Naive thymus-derived CD4-positive, alpha-beta T cell (primary cell): ENCODE measurements at regions of chr6 and their contacts with region 1.

Region 1: GRCh38 chr6:107800564-107801164 is 23.4 kb downstream of the SCML4 start:
- DNase-seq: peak in 4 of 9 donors; percentile 28 to 53 (median 42)
- ATAC-seq: peak; percentile 75
- H3K4me3 ChIP-seq: no peak overlapping the region
- H3K4me3 Mint-ChIP-seq: peak overlapping the region in 2 of 10 donors; percentile 33 to 43
- H3K27ac ChIP-seq: no peak overlapping the region
- H3K27ac Mint-ChIP-seq: peak overlapping the region in 8 of 9 donors; percentile 53 to 96 (median 90)
- H3K4me1 ChIP-seq: peaks cover 10 to 34% of the 10 kb centered on the region in 2 donors
- H3K4me1 Mint-ChIP-seq: peaks cover 17 to 87% (median 81%) of the 10 kb centered on the region in 7 donors
- H3K27me3 ChIP-seq: no peaks in the 10 kb centered on the region
- H3K27me3 Mint-ChIP-seq: peaks cover 0 to 9% (median 0%) of the 10 kb centered on the region in 5 donors

Region 2: DNA sequence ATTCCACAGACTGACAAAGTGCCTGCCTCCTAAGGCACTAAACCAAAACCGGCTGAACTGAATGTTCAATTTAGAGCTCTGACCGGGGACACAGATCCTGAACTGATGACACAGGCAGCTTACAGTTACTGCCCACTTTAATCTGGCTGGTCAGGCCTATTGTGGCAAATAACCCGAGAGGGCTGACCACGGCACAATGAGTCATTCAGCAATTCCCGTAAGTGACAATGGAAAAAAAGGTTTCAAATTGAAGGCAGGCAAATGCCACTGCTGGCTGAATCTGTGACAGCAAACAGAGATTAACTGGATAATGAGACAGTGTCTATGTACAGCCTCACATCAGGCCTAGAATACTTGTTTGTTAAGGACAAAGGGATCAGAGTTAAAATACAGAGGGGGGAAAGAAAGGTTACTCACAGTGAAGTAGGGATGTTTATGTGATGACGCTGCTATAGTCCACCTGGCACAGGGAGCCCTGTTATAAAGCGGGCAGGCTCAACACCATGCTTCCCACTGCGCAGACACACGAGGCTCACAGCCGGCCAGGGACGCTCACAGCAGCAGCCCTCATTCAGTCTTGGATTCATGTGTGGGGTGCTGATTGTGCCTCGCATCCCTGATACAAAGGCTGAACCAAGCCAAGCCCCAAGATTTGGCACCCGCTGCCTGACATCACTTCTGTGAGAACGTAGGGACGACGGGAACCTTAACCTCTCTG is 1225.8 kb before region 1 on chr6:
- CTCF ChIA-PET with region 1: no interaction called
- POLR2A ChIA-PET with region 1: no interaction called
- intact Hi-C with region 1: no loop called
- DNase-seq: no peak
- ATAC-seq: no peak
- H3K4me3 ChIP-seq: no peak overlapping the region
- H3K4me3 Mint-ChIP-seq: no peak overlapping the region
- H3K27ac ChIP-seq: no peak overlapping the region
- H3K27ac Mint-ChIP-seq: no peak overlapping the region
- H3K4me1 ChIP-seq: no peaks in the 10 kb centered on the region
- H3K4me1 Mint-ChIP-seq: peaks cover 0 to 21% (median 0%) of the 10 kb centered on the region in 7 donors
- H3K27me3 ChIP-seq: no peaks in the 10 kb centered on the region
- H3K27me3 Mint-ChIP-seq: no peaks in the 10 kb centered on the region

Region 3: GRCh38 chr6:107493158-107494057 is 307.3 kb before region 1 on chr6:
- CTCF ChIA-PET with region 1: no interaction called
- POLR2A ChIA-PET with region 1: no interaction called
- intact Hi-C with region 1: no loop called
- DNase-seq: no peak
- ATAC-seq: no peak
- H3K4me3 ChIP-seq: no peak overlapping the region
- H3K4me3 Mint-ChIP-seq: no peak overlapping the region
- H3K27ac ChIP-seq: no peak overlapping the region
- H3K27ac Mint-ChIP-seq: no peak overlapping the region
- H3K4me1 ChIP-seq: peaks cover 9 to 12% of the 10 kb centered on the region in 2 donors
- H3K4me1 Mint-ChIP-seq: peaks cover 7 to 19% (median 15%) of the 10 kb centered on the region in 7 donors
- H3K27me3 ChIP-seq: peaks cover 10 to 23% of the 10 kb centered on the region in 2 donors
- H3K27me3 Mint-ChIP-seq: peaks cover 12 to 46% (median 39%) of the 10 kb centered on the region in 5 donors

Region 4: DNA sequence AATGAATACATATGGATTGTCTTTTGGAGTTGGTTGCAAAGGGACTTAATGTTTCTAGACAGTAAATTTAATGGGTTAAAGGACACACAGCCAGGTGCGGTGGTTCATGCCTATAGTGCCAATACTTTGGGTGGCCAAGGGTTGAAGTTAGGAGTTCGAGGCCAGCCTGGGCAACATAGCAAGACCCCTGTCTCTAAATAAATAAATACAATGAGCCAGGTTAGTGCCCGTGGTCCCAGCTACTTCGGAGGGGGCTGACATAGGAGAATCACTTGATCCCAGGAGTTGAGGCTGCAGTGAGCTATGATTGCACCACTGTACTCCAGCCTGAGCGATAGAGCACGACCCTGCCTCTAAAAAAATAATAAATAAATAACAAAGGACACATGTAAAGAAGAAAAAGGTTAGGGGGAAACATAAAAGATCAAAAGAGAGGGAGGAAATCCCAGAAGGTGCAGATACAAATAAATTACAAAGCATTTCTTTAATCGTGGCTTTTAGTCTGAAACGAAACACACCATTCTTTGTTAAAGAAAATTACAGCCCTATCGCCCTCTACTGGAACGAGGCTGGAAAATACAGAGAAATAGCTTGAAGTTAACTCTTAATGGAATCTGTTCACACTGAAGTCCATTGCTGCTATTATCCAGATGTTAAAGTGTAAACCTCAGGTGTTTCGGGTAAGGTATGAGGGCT is 66.1 kb after region 1 on chr6:
- CTCF ChIA-PET with region 1: no interaction called
- POLR2A ChIA-PET with region 1: no interaction called
- intact Hi-C with region 1: loop called (anchors 1 kb)
- DNase-seq: peak in 7 of 9 donors; percentile 29 to 64 (median 52)
- ATAC-seq: peak; percentile 76
- H3K4me3 ChIP-seq: no peak overlapping the region
- H3K4me3 Mint-ChIP-seq: peak overlapping the region in 1 of 10 donors; percentile 32
- H3K27ac ChIP-seq: no peak overlapping the region
- H3K27ac Mint-ChIP-seq: peak overlapping the region in 3 of 9 donors; percentile 37 to 64 (median 45)
- H3K4me1 ChIP-seq: no peaks in the 10 kb centered on the region
- H3K4me1 Mint-ChIP-seq: peaks cover 0 to 10% (median 4%) of the 10 kb centered on the region in 7 donors
- H3K27me3 ChIP-seq: no peaks in the 10 kb centered on the region
- H3K27me3 Mint-ChIP-seq: peaks cover 0 to 10% (median 0%) of the 10 kb centered on the region in 5 donors